Activated CD4-positive, alpha-beta T cell treated with anti-CD3 and anti-CD28 coated beads, Interleukin-2, amount 10 ng/mL, durations not matched to agents 24 days and 14 days (primary cell): ENCODE measurements at regions of chr12 and their contacts with region 1.

Region 1: GRCh38 chr12:95072900-95073697 is at the start of gene NR2C1:
- DNase-seq: peak; percentile 97
- H3K4me3 Mint-ChIP-seq: peak within 1 kb of the TSS; percentile 91
- H3K27ac Mint-ChIP-seq: peak within 1 kb of the TSS; percentile 90
- H3K4me1 Mint-ChIP-seq: peaks cover 8% of the 10 kb centered on the region
- H3K27me3 Mint-ChIP-seq: peaks cover 3% of the 10 kb centered on the region
- total RNA-seq, gene NR2C1: 24.4 and 28.5 TPM in 2 replicates

Region 2: DNA sequence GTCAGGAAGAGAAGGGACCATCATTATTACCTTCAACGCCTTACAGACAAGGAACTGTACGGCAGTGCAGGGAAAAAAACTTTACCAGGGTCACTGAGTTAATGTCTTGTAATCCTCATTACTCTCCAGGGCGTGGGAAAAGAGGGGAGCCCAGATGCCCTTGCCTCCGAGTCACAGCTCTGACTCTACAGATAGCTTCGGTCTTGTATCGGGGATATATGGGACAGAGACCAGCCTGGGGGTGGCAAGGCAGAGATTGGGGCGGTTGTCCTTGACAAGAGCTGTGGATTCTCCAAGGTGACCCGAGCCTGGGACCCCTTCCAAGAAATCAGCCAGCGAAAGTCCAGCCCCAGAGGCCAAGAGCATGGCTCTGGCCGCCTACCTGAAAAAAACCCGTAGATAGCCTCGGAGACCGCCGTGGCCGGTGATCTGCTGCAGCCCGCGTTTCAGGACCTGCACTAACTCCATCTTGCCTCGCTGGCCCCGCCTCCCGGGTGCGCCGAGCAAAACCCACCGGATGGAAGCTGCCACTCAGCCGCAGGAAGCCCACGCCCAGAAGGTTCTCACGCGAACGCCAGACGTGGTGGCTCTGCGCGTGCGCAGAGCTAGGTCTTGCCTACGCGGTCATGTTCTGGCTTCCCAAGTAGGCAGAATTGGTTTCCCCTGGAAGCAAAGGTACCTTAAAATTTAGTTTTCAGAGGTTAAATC is 69.7 kb before region 1 on chr12 and contains the start of gene NDUFA12:
- intact Hi-C with region 1: loop called (anchors 1 kb)
- DNase-seq: peak; percentile 99
- H3K4me3 Mint-ChIP-seq: peak within 1 kb of the TSS; percentile 95
- H3K27ac Mint-ChIP-seq: peak within 1 kb of the TSS; percentile 92
- H3K4me1 Mint-ChIP-seq: peaks cover 31% of the 10 kb centered on the region
- H3K27me3 Mint-ChIP-seq: peaks cover 1% of the 10 kb centered on the region
- total RNA-seq, gene NDUFA12: 111 and 116 TPM in 2 replicates

Region 3: DNA sequence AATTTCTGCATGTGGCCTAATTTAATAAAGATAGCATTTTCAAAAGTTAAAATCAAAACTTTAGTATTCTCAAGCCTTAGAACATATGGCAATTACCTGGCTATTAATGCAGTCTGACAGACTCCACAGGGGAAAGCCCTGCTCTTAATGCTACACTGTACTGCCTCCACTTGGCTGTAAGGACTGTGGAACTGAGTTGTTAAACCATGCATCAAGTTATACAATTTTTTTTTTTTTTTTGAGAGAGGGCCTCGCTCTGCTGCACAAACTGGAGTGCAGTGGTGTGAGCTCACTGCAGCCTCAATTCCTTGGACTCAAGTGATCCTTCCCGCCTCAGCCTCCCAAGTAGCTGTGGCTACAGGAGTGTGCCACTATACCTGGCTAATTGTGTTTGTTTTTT is 50.6 kb before region 1 on chr12:
- intact Hi-C with region 1: no loop called
- DNase-seq: no peak
- H3K4me3 Mint-ChIP-seq: no peak overlapping the region
- H3K27ac Mint-ChIP-seq: no peak overlapping the region
- H3K4me1 Mint-ChIP-seq: no peaks in the 10 kb centered on the region
- H3K27me3 Mint-ChIP-seq: no peaks in the 10 kb centered on the region

Region 4: GRCh38 chr12:95057424-95057823 is 15.7 kb before region 1 on chr12:
- intact Hi-C with region 1: no loop called
- DNase-seq: no peak
- H3K4me3 Mint-ChIP-seq: no peak overlapping the region
- H3K27ac Mint-ChIP-seq: no peak overlapping the region
- H3K4me1 Mint-ChIP-seq: no peaks in the 10 kb centered on the region
- H3K27me3 Mint-ChIP-seq: no peaks in the 10 kb centered on the region

Region 5: GRCh38 chr12:95102916-95103671 is 30.0 kb after region 1 on chr12:
- intact Hi-C with region 1: loop called (anchors 1 kb)
- DNase-seq: peak; percentile 80
- H3K4me3 Mint-ChIP-seq: peak overlapping the region; percentile 44
- H3K27ac Mint-ChIP-seq: peak overlapping the region; percentile 64
- H3K4me1 Mint-ChIP-seq: peaks cover 11% of the 10 kb centered on the region
- H3K27me3 Mint-ChIP-seq: no peaks in the 10 kb centered on the region

Region 6: DNA sequence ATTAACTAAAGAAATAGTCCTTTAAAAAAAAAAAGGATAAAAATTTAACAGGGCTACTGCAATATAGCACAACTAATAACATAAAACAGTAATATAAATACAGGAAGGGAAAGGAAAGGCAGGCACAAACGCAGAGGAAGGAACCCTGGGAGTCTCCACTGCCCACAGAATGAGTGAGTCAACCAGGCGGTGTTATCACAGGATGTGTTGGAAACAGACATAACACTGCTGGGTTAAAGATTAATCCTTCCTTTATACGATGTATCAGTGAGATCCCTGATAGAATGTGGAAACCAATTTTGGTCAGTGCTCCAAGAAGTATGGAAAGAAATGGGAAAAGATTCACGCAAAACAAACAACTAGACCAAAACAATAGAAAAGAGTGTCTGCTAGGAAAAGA is 96.3 kb after region 1 on chr12:
- intact Hi-C with region 1: no loop called
- DNase-seq: no peak
- H3K4me3 Mint-ChIP-seq: no peak overlapping the region
- H3K27ac Mint-ChIP-seq: no peak overlapping the region
- H3K4me1 Mint-ChIP-seq: no peaks in the 10 kb centered on the region
- H3K27me3 Mint-ChIP-seq: no peaks in the 10 kb centered on the region

Region 7: DNA sequence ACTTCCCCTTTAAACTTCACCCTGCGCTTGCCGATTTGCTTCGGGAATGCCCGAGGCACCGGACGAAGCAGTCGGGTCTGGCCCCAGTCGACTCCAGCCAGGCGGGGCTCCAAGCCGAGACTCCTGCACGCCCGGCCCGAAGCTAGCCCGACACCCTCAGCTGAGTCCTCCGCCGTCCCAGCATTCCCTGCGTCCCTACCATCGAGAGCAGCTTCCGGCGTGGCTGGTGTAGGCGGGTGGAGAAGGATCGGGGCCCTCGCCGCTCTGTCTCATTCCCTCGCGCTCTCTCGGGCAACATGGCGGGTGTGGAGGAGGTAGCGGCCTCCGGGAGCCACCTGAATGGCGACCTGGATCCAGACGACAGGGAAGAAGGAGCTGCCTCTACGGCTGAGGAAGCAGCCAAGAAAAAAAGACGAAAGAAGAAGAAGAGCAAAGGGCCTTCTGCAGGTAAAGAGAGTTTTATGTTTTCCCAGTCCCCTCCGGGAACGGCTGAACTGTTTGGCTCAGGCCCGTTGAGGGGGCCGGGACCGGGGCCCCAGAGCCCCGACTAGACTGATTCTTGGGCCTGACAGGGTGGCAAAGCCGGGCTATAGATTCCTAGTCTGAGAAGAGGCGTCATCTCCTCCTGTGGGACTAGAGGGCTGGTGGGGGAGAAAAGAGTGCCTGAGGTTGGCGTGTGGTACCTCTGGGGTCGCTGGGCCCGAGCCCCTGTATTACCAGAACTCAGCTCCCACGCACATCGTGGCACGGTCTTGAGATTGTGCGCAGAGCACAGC is 401.0 kb after region 1 on chr12 and contains the start of gene METAP2:
- intact Hi-C with region 1: loop called (anchors 1 kb)
- DNase-seq: peak; percentile 97
- H3K4me3 Mint-ChIP-seq: peak within 1 kb of the TSS; percentile 94
- H3K27ac Mint-ChIP-seq: peak within 1 kb of the TSS; percentile 100
- H3K4me1 Mint-ChIP-seq: peaks cover 32% of the 10 kb centered on the region
- H3K27me3 Mint-ChIP-seq: no peaks in the 10 kb centered on the region
- total RNA-seq, gene METAP2: 125 and 133 TPM in 2 replicates